GM12878 (cell line): ENCODE measurements at regions of chr17 and their contacts with region 1.

Region 1: GRCh38 chr17:66301797-66302741 is at the start of gene PRKCA:
- DNase-seq: no peak
- ATAC-seq: peak; percentile 60
- H3K4me3 ChIP-seq: peak within 1 kb of the TSS; percentile 65
- H3K27ac ChIP-seq: no peak within 1 kb of the TSS
- H3K4me1 ChIP-seq: no peaks in the 10 kb centered on the region
- H3K27me3 ChIP-seq: peaks cover 0 to 11% of the 10 kb centered on the region in 2 experiments; a peak in 2 of 4 replicates
- CTCF ChIP-seq: no peak
- EP300 ChIP-seq: no peak
- POLR2A ChIP-seq: peak; percentile 71
- RAD21 ChIP-seq: no peak
- polyA plus RNA-seq, gene PRKCA: 0.11 to 0.27 TPM

Region 2: GRCh38 chr17:66165513-66166123 is 136.5 kb before region 1 on chr17:
- CTCF ChIA-PET with region 1: no interaction called
- POLR2A ChIA-PET with region 1: no interaction called
- RAD21 ChIA-PET with region 1: no interaction called
- SMC1A ChIA-PET with region 1: no interaction called
- in situ Hi-C with region 1: no loop called
- intact Hi-C with region 1: no loop called
- DNase-seq: peak; percentile 5
- ATAC-seq: peak; percentile 53; the same call in 2 of the 3 replicates
- H3K4me3 ChIP-seq: no peak overlapping the region
- H3K27ac ChIP-seq: no peak overlapping the region
- H3K4me1 ChIP-seq: no peaks in the 10 kb centered on the region
- H3K27me3 ChIP-seq: no peaks in the 10 kb centered on the region; a peak in 1 of 4 replicates
- CTCF ChIP-seq: peak; percentile 54 to 73 (median 56); a peak in 5 of 6 replicates
- EP300 ChIP-seq: no peak
- POLR2A ChIP-seq: no peak
- RAD21 ChIP-seq: peak; percentile 91

Region 3: GRCh38 chr17:66348584-66349165 is 46.6 kb after region 1 on chr17:
- CTCF ChIA-PET with region 1: no interaction called
- POLR2A ChIA-PET with region 1: no interaction called
- RAD21 ChIA-PET with region 1: no interaction called
- SMC1A ChIA-PET with region 1: no interaction called
- in situ Hi-C with region 1: no loop called
- intact Hi-C with region 1: no loop called
- DNase-seq: no peak
- ATAC-seq: peak; percentile 55
- H3K4me3 ChIP-seq: no peak overlapping the region
- H3K27ac ChIP-seq: no peak overlapping the region
- H3K4me1 ChIP-seq: no peaks in the 10 kb centered on the region
- H3K27me3 ChIP-seq: no peaks in the 10 kb centered on the region
- CTCF ChIP-seq: no peak
- EP300 ChIP-seq: no peak
- POLR2A ChIP-seq: no peak
- RAD21 ChIP-seq: no peak

Region 4: DNA sequence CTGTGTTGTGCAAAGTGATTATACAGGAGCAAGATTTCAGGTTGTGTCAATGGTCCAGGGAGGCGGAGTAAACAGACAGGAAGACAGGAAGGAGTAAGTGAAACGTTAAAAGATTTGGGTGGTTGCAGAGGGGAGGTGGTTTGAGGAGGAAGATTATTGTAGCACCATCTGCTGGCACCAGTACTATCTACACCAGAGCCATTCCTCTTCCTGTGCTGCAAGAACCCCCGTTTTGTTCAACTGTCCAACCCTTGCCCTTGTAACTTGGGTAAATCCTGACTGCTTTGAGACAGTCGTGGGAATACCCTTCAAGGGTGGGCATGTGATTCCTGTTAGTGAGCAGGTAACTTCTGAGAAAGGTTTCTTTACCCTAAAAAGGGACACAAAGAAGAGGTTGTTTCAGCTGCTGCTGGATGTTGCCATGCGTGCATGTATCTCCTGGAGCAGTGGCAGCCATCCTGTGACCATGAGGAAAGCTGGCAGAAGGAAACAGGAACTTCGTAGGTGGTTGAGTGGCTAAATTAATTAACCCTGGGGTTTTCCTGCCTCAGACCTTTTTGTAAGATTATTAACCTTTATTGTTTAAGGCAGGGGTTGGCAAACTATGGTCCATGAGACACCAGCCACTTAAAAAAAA is 124.4 kb after region 1 on chr17:
- CTCF ChIA-PET with region 1: no interaction called
- POLR2A ChIA-PET with region 1: no interaction called
- RAD21 ChIA-PET with region 1: interaction called, 3 read pairs
- SMC1A ChIA-PET with region 1: no interaction called
- in situ Hi-C with region 1: no loop called
- intact Hi-C with region 1: loop called (anchors 5 kb)
- DNase-seq: no peak
- ATAC-seq: peak; percentile 93
- H3K4me3 ChIP-seq: no peak overlapping the region
- H3K27ac ChIP-seq: no peak overlapping the region
- H3K4me1 ChIP-seq: no peaks in the 10 kb centered on the region
- H3K27me3 ChIP-seq: no peaks in the 10 kb centered on the region
- CTCF ChIP-seq: peak; percentile 27 to 33 (median 33); a peak in 4 of 6 replicates
- EP300 ChIP-seq: no peak
- POLR2A ChIP-seq: no peak
- RAD21 ChIP-seq: 0 out of 2 replicates have a peak, but pooled peaks have one; percentile 14

Region 5: GRCh38 chr17:66466840-66467367 is 164.8 kb after region 1 on chr17:
- CTCF ChIA-PET with region 1: no interaction called
- POLR2A ChIA-PET with region 1: no interaction called
- RAD21 ChIA-PET with region 1: no interaction called
- SMC1A ChIA-PET with region 1: no interaction called
- in situ Hi-C with region 1: no loop called
- intact Hi-C with region 1: no loop called
- DNase-seq: no peak
- ATAC-seq: peak; percentile 40
- H3K4me3 ChIP-seq: no peak overlapping the region
- H3K27ac ChIP-seq: no peak overlapping the region
- H3K4me1 ChIP-seq: peaks cover 25% of the 10 kb centered on the region
- H3K27me3 ChIP-seq: no peaks in the 10 kb centered on the region
- CTCF ChIP-seq: no peak
- EP300 ChIP-seq: no peak
- POLR2A ChIP-seq: no peak
- RAD21 ChIP-seq: no peak

Region 6: GRCh38 chr17:66673668-66674315 is 371.7 kb after region 1 on chr17:
- CTCF ChIA-PET with region 1: no interaction called
- POLR2A ChIA-PET with region 1: interaction called, 3 read pairs
- RAD21 ChIA-PET with region 1: no interaction called
- SMC1A ChIA-PET with region 1: no interaction called
- in situ Hi-C with region 1: no loop called
- intact Hi-C with region 1: loop called (anchors 5 kb)
- DNase-seq: no peak
- ATAC-seq: peak; percentile 72
- H3K4me3 ChIP-seq: no peak overlapping the region
- H3K27ac ChIP-seq: no peak overlapping the region
- H3K4me1 ChIP-seq: no peaks in the 10 kb centered on the region
- H3K27me3 ChIP-seq: no peaks in the 10 kb centered on the region
- CTCF ChIP-seq: peak; percentile 49 to 63 (median 55); a peak in 5 of 6 replicates
- EP300 ChIP-seq: no peak
- POLR2A ChIP-seq: no peak
- RAD21 ChIP-seq: peak; percentile 74